Dorsolateral prefrontal cortex (tissue), 120 donors: ENCODE measurements at regions of chr2 and their contacts with region 1.

Region 1: GRCh38 chr2:196291873-196292800 is 120.8 kb upstream of the STK17B start:
- DNase-seq: peak in 1 of 10 donors; percentile 16
- H3K4me3 ChIP-seq: no peak overlapping the region
- H3K27ac ChIP-seq: no peak overlapping the region
- H3K27me3 ChIP-seq: no peaks in the 10 kb centered on the region
- CTCF ChIP-seq: no peak

Region 2: GRCh38 chr2:196750982-196751635 is 459.0 kb after region 1 on chr2:
- intact Hi-C with region 1: loop called (anchors 5 to 10 kb)
- DNase-seq: peak in 8 of 10 donors; percentile 16 to 60 (median 46)
- H3K4me3 ChIP-seq: no peak overlapping the region
- H3K27ac ChIP-seq: no peak overlapping the region
- H3K27me3 ChIP-seq: no peaks in the 10 kb centered on the region
- CTCF ChIP-seq: peak; percentile 39 to 82 (median 71)

Region 3: GRCh38 chr2:196758474-196759377 is 466.6 kb after region 1 on chr2:
- intact Hi-C with region 1: loop called (anchors 5 to 10 kb)
- DNase-seq: no peak
- H3K4me3 ChIP-seq: peak overlapping the region in 3 of 59 donors; percentile 7 to 24 (median 9)
- H3K27ac ChIP-seq: peak overlapping the region in 19 of 59 donors; percentile 1 to 58 (median 34)
- H3K27me3 ChIP-seq: no peaks in the 10 kb centered on the region
- CTCF ChIP-seq: peak; percentile 39 to 78 (median 62)